ENCODE measurements at regions of chr2 and their contacts with region 1.

Region 1: GRCh38 chr2:160269803-160270570 is 69.9 kb upstream of the ITGB6 start:
- DNase-seq: peak; percentile 25
- H3K4me3 Mint-ChIP-seq: peak overlapping the region; percentile 62
- H3K27ac Mint-ChIP-seq: no peak overlapping the region
- H3K4me1 Mint-ChIP-seq: peaks cover 33% of the 10 kb centered on the region
- H3K27me3 Mint-ChIP-seq: peaks cover 16% of the 10 kb centered on the region

Region 2: DNA sequence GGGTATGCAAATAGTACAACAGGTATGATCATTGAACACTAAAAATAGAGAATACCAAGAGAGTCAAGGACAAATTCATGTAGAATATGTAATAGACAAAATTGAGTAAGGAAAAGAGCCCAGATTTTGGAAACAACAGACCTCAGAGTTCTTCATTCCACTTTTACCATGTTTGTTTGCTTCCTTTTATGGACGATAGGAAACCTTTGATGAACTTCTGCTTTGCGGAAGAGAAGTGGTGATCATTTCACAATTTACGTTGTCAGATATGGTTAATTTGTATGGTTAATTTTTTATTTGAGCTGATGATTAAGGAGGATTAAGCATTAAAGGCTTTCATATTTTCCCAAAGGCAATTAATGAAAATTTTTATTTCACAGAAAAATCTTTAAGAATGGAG is 541.4 kb before region 1 on chr2:
- intact Hi-C with region 1: no loop called
- DNase-seq: no peak
- H3K4me3 Mint-ChIP-seq: no peak overlapping the region
- H3K27ac Mint-ChIP-seq: no peak overlapping the region
- H3K4me1 Mint-ChIP-seq: peaks cover 25% of the 10 kb centered on the region
- H3K27me3 Mint-ChIP-seq: no peaks in the 10 kb centered on the region

Region 3: GRCh38 chr2:160039166-160039903 is 230.7 kb before region 1 on chr2:
- intact Hi-C with region 1: no loop called
- DNase-seq: no peak
- H3K4me3 Mint-ChIP-seq: no peak overlapping the region
- H3K27ac Mint-ChIP-seq: no peak overlapping the region
- H3K4me1 Mint-ChIP-seq: peaks cover 8% of the 10 kb centered on the region
- H3K27me3 Mint-ChIP-seq: peaks cover 11% of the 10 kb centered on the region

Region 4: GRCh38 chr2:160288324-160288723 is 18.3 kb after region 1 on chr2:
- intact Hi-C with region 1: no loop called
- DNase-seq: no peak
- H3K4me3 Mint-ChIP-seq: no peak overlapping the region
- H3K27ac Mint-ChIP-seq: no peak overlapping the region
- H3K4me1 Mint-ChIP-seq: peaks cover 16% of the 10 kb centered on the region
- H3K27me3 Mint-ChIP-seq: no peaks in the 10 kb centered on the region

Region 5: GRCh38 chr2:160301420-160301819 is 31.4 kb after region 1 on chr2:
- intact Hi-C with region 1: loop called (anchors 1 kb)
- DNase-seq: no peak
- H3K4me3 Mint-ChIP-seq: no peak overlapping the region
- H3K27ac Mint-ChIP-seq: peak overlapping the region; percentile 37
- H3K4me1 Mint-ChIP-seq: peaks cover 49% of the 10 kb centered on the region
- H3K27me3 Mint-ChIP-seq: no peaks in the 10 kb centered on the region

Measured in activated T-helper 1 cell treated with anti-CD3 and anti-CD28 coated beads, Interleukin-12 subunit alpha, Interleukin-12 subunit beta, Interleukin-2, Interleukin-4 antibody, amounts not matched to agents 30 ng/mL and 10 ng/mL and 1 ng/mL, durations not matched to agents 14 hours and 24 hours and 36 hours (primary cell).